ENCODE measurements at regions of chr6 and their contacts with region 1.

Region 1: GRCh38 chr6:31639449-31639861 is 13.0 kb downstream of the BAG6 start:
- DNase-seq: no peak
- ATAC-seq: no peak
- H3K4me3 ChIP-seq: no peak overlapping the region
- H3K4me3 Mint-ChIP-seq: no peak overlapping the region
- H3K27ac ChIP-seq: no peak overlapping the region
- H3K27ac Mint-ChIP-seq: peak overlapping the region in 1 of 2 donors; percentile 46
- H3K4me1 ChIP-seq: no peaks in the 10 kb centered on the region
- H3K4me1 Mint-ChIP-seq: peaks cover 0 to 2% (median 0%) of the 10 kb centered on the region in 3 donors
- H3K27me3 ChIP-seq: no peaks in the 10 kb centered on the region
- H3K27me3 Mint-ChIP-seq: no peaks in the 10 kb centered on the region

Region 2: DNA sequence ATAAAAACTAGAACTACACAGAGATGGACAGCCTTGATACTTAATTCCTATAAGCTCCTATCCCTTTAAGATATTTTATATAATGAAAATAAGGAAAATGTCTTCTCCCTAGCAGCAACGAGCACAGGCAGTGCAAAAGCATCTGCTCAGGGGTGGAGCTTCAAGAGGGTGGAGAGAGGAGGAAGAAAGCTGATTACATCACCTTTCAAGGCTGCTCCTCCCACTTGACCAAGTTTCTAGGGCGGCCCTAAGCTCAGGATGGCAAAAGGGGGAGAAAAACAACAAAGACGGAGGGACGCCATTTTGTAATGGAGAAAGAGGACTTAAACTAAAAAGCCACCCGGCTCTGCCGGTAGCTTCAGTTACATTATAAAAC is 1024.6 kb before region 1 on chr6:
- CTCF ChIA-PET with region 1: no interaction called
- POLR2A ChIA-PET with region 1: no interaction called
- DNase-seq: peak; percentile 56 to 97 (median 88)
- ATAC-seq: peak; percentile 58 to 63 (median 59)
- H3K4me3 ChIP-seq: peak overlapping the region; percentile 71 to 100
- H3K4me3 Mint-ChIP-seq: peak overlapping the region; percentile 93 to 100 (median 98)
- H3K27ac ChIP-seq: peak overlapping the region; percentile 100
- H3K27ac Mint-ChIP-seq: peak overlapping the region; percentile 100
- H3K4me1 ChIP-seq: peaks cover 42 to 43% of the 10 kb centered on the region in 2 experiments
- H3K4me1 Mint-ChIP-seq: peaks cover 63 to 67% (median 64%) of the 10 kb centered on the region in 3 donors
- H3K27me3 ChIP-seq: no peaks in the 10 kb centered on the region
- H3K27me3 Mint-ChIP-seq: peaks cover 0 to 2% of the 10 kb centered on the region in 2 donors

Region 3: DNA sequence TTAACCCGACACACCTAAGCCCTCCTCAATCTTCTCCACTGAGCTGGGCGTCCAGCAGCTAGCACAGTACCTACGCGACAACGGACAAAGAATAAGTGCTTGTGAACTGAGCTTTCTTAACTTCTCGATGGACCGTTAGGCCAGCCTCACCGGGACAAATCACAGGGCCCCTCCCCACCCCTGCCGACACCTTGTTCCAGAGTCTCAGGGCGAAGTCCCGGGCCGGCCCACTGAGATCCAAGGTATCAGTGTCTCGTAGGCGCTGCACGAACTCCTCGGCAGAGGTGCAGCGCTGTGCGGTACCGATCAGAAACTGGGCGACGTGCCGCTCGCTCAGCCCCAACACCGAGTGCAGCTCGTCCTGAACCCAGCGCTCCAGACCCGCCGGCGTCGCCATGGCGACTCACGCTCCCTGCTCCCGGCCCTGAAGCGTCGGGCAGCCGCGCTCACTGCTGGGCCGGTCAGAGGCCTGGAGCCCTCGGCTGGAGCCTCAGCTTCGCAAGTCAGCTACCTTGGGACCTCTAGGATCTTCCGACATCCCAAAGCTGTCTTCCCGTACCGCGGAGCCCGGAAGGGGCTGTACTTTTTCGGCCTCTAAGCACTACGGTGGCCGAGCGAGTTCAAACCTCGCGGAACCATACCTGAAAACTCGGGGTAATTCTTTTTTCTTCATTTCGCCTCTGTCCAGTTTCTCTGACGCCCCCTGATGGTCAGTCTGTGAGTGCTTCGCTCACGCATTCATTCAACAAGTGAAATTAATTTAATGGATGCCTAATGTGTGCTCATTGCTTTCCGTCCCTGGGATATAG is 966.8 kb before region 1 on chr6 and contains the start of gene DHX16:
- CTCF ChIA-PET with region 1: no interaction called
- POLR2A ChIA-PET with region 1: interaction called in 1 of 2 experiments, 15 read pairs
- DNase-seq: peak; percentile 62 to 95 (median 80)
- ATAC-seq: peak; percentile 80 to 84 (median 81)
- H3K4me3 ChIP-seq: peak within 1 kb of the TSS; percentile 72 to 99
- H3K4me3 Mint-ChIP-seq: peak within 1 kb of the TSS; percentile 85 to 93 (median 91)
- H3K27ac ChIP-seq: peak within 1 kb of the TSS; percentile 33
- H3K27ac Mint-ChIP-seq: peak within 1 kb of the TSS; percentile 79 to 84
- H3K4me1 ChIP-seq: peaks cover 4 to 17% of the 10 kb centered on the region in 2 experiments
- H3K4me1 Mint-ChIP-seq: peaks cover 39 to 48% (median 41%) of the 10 kb centered on the region in 3 donors
- H3K27me3 ChIP-seq: no peaks in the 10 kb centered on the region
- H3K27me3 Mint-ChIP-seq: no peaks in the 10 kb centered on the region
- total RNA-seq, gene DHX16: 29.0 to 51.9 (median 46.2) TPM

Region 4: GRCh38 chr6:31851485-31851832 is 212.0 kb after region 1 on chr6:
- CTCF ChIA-PET with region 1: no interaction called
- POLR2A ChIA-PET with region 1: interaction called in 1 of 2 experiments, 11 read pairs
- DNase-seq: no peak
- ATAC-seq: no peak
- H3K4me3 ChIP-seq: no peak overlapping the region
- H3K4me3 Mint-ChIP-seq: no peak overlapping the region
- H3K27ac ChIP-seq: no peak overlapping the region
- H3K27ac Mint-ChIP-seq: no peak overlapping the region
- H3K4me1 ChIP-seq: no peaks in the 10 kb centered on the region
- H3K4me1 Mint-ChIP-seq: no peaks in the 10 kb centered on the region
- H3K27me3 ChIP-seq: no peaks in the 10 kb centered on the region
- H3K27me3 Mint-ChIP-seq: no peaks in the 10 kb centered on the region

Region 5: DNA sequence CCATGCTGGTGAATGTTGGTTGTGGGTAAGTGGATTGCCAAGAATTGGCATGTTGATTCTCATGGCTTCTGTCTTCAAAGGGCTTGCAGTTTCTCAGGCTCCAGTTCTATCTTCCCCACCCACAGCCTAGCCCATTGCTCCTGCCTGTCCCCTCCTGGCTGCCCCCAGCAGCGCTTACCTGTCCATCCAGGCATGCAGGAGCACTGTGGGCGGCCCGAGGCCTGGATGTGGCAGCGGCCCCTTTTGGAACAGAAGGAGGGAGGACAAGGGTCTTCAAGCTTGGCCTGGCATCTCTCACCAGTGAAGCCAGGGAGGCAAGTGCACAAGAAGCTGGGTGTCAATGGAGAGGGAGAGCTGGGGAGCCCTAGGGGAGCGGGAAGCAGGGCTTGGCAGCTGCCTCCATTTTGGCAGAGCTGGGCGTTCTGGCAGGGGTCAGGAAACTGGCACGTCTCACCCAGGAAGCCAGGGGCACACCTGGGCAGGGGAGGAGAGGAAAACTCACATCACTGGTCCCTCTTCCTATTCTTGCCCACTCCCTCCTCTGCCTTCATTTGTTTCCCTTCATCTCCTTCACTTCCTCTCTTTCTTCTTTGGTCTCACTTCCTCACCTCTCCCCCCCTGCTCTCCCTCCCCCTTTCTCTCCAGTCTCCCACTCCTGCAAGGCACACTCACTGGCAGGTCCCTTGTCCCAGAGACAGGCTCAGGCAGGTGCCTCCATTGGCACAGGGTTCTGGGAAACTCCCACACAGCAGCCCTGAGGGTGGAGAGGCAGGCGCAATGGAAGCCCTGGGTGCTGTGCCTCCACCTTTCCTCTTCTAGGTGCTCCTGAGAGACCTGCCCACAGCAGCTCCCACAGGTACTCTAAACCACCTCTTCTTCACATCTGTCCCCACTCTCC is 583.1 kb after region 1 on chr6:
- CTCF ChIA-PET with region 1: no interaction called
- POLR2A ChIA-PET with region 1: no interaction called
- DNase-seq: no peak
- ATAC-seq: no peak
- H3K4me3 ChIP-seq: no peak overlapping the region
- H3K4me3 Mint-ChIP-seq: peak overlapping the region in 1 of 3 donors; percentile 4
- H3K27ac ChIP-seq: no peak overlapping the region
- H3K27ac Mint-ChIP-seq: peak overlapping the region in 1 of 2 donors; percentile 4
- H3K4me1 ChIP-seq: peaks cover 0 to 14% of the 10 kb centered on the region in 2 experiments
- H3K4me1 Mint-ChIP-seq: peaks cover 15 to 21% (median 19%) of the 10 kb centered on the region in 3 donors
- H3K27me3 ChIP-seq: peaks cover 0 to 29% of the 10 kb centered on the region in 2 experiments
- H3K27me3 Mint-ChIP-seq: peaks cover 2 to 3% of the 10 kb centered on the region in 2 donors

Measured in T-cell (primary cell).